ENCODE measurements at regions of chr1 and their contacts with region 1.

Region 1: DNA sequence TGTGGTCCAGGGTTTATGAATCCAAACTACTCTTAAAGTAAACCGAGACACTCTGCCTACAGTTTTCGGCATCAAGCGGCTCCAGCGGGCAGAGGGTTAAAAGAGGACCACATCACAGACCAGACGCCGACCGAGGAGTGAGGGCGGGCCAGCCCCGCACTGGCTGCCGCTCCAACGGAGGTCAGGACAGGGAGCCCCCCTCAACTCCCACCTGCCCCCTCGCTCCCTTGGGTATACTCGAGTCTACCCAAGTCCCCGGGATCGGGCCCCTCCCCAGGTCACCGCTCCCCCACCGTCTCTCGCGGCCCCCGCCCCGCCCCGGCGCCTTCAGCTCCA is 312 bp downstream of the ARNT start:
- DNase-seq: no peak
- H3K4me3 ChIP-seq: peak overlapping the region; percentile 60 to 93
- H3K4me3 Mint-ChIP-seq: peak overlapping the region; percentile 88 to 97 (median 95)
- H3K27ac ChIP-seq: peak overlapping the region; percentile 81
- H3K27ac Mint-ChIP-seq: peak overlapping the region; percentile 88 to 97 (median 95)
- H3K4me1 ChIP-seq: peaks cover 25% of the 10 kb centered on the region
- H3K4me1 Mint-ChIP-seq: peaks cover 23 to 47% (median 35%) of the 10 kb centered on the region in 4 donors
- H3K27me3 ChIP-seq: no peaks in the 10 kb centered on the region
- H3K27me3 Mint-ChIP-seq: no peaks in the 10 kb centered on the region

Region 2: GRCh38 chr1:150696590-150697524 is 179.2 kb before region 1 on chr1 and contains the start of gene GOLPH3L:
- CTCF ChIA-PET with region 1: no interaction called
- POLR2A ChIA-PET with region 1: interaction called, 4 read pairs
- intact Hi-C with region 1: loop called (anchors 5 kb)
- DNase-seq: peak; percentile 90 to 97 (median 93)
- H3K4me3 ChIP-seq: peak within 1 kb of the TSS; percentile 86 to 92
- H3K4me3 Mint-ChIP-seq: peak within 1 kb of the TSS; percentile 94 to 100 (median 98)
- H3K27ac ChIP-seq: peak within 1 kb of the TSS; percentile 70
- H3K27ac Mint-ChIP-seq: peak within 1 kb of the TSS; percentile 88 to 100 (median 96)
- H3K4me1 ChIP-seq: peaks cover 27% of the 10 kb centered on the region
- H3K4me1 Mint-ChIP-seq: peaks cover 17 to 40% (median 27%) of the 10 kb centered on the region in 4 donors
- H3K27me3 ChIP-seq: no peaks in the 10 kb centered on the region
- H3K27me3 Mint-ChIP-seq: peaks cover 1 to 3% of the 10 kb centered on the region in 2 donors
- total RNA-seq, gene GOLPH3L: 29.7 to 30.4 TPM

Region 3: GRCh38 chr1:150765296-150765976 is 110.7 kb before region 1 on chr1 and contains the start of gene CTSS:
- CTCF ChIA-PET with region 1: no interaction called
- POLR2A ChIA-PET with region 1: interaction called, 4 read pairs
- intact Hi-C with region 1: loop called (anchors 5 kb)
- DNase-seq: peak in 4 of 5 donors; percentile 34 to 46 (median 38)
- H3K4me3 ChIP-seq: peak within 1 kb of the TSS; percentile 55 to 71
- H3K4me3 Mint-ChIP-seq: peak within 1 kb of the TSS; percentile 89 to 98 (median 93)
- H3K27ac ChIP-seq: peak within 1 kb of the TSS; percentile 51
- H3K27ac Mint-ChIP-seq: peak within 1 kb of the TSS; percentile 87 to 98 (median 95)
- H3K4me1 ChIP-seq: peaks cover 43% of the 10 kb centered on the region
- H3K4me1 Mint-ChIP-seq: peaks cover 29 to 58% (median 42%) of the 10 kb centered on the region in 4 donors
- H3K27me3 ChIP-seq: no peaks in the 10 kb centered on the region
- H3K27me3 Mint-ChIP-seq: no peaks in the 10 kb centered on the region
- total RNA-seq, gene CTSS: 119 TPM

Region 4: GRCh38 chr1:150841626-150842025 is 34.5 kb before region 1 on chr1:
- CTCF ChIA-PET with region 1: no interaction called
- POLR2A ChIA-PET with region 1: no interaction called
- intact Hi-C with region 1: loop called (anchors 5 kb)
- DNase-seq: peak in 4 of 5 donors; percentile 32 to 63 (median 46)
- H3K4me3 ChIP-seq: no peak overlapping the region
- H3K4me3 Mint-ChIP-seq: peak overlapping the region in 2 of 8 donors; percentile 57 to 64
- H3K27ac ChIP-seq: no peak overlapping the region
- H3K27ac Mint-ChIP-seq: peak overlapping the region in 6 of 7 donors; percentile 15 to 88 (median 80)
- H3K4me1 ChIP-seq: peaks cover 17% of the 10 kb centered on the region
- H3K4me1 Mint-ChIP-seq: peaks cover 18 to 26% (median 23%) of the 10 kb centered on the region in 4 donors
- H3K27me3 ChIP-seq: no peaks in the 10 kb centered on the region
- H3K27me3 Mint-ChIP-seq: no peaks in the 10 kb centered on the region

Region 5: DNA sequence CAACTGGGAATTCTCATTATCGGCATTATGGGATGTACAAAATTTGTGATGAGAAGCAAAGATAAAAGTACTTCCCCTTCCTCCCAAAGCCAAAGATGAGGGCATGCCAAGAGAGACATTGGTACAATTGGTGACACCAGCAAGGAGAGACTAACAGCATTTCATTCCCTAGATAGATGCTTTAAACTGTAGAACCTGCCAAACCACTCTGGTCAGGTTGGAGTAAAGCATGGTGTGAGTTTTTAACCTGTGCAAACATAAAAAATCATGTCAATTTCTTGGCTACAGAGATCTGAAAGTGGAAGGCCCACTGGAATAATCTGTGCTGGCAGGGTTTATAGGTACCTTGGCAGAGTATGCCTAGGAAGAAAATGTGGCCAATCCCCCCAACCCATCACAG is 30.3 kb after region 1 on chr1:
- CTCF ChIA-PET with region 1: no interaction called
- POLR2A ChIA-PET with region 1: no interaction called
- intact Hi-C with region 1: no loop called
- DNase-seq: no peak
- H3K4me3 ChIP-seq: no peak overlapping the region
- H3K4me3 Mint-ChIP-seq: no peak overlapping the region
- H3K27ac ChIP-seq: no peak overlapping the region
- H3K27ac Mint-ChIP-seq: no peak overlapping the region
- H3K4me1 ChIP-seq: no peaks in the 10 kb centered on the region
- H3K4me1 Mint-ChIP-seq: no peaks in the 10 kb centered on the region
- H3K27me3 ChIP-seq: no peaks in the 10 kb centered on the region
- H3K27me3 Mint-ChIP-seq: no peaks in the 10 kb centered on the region

Region 6: DNA sequence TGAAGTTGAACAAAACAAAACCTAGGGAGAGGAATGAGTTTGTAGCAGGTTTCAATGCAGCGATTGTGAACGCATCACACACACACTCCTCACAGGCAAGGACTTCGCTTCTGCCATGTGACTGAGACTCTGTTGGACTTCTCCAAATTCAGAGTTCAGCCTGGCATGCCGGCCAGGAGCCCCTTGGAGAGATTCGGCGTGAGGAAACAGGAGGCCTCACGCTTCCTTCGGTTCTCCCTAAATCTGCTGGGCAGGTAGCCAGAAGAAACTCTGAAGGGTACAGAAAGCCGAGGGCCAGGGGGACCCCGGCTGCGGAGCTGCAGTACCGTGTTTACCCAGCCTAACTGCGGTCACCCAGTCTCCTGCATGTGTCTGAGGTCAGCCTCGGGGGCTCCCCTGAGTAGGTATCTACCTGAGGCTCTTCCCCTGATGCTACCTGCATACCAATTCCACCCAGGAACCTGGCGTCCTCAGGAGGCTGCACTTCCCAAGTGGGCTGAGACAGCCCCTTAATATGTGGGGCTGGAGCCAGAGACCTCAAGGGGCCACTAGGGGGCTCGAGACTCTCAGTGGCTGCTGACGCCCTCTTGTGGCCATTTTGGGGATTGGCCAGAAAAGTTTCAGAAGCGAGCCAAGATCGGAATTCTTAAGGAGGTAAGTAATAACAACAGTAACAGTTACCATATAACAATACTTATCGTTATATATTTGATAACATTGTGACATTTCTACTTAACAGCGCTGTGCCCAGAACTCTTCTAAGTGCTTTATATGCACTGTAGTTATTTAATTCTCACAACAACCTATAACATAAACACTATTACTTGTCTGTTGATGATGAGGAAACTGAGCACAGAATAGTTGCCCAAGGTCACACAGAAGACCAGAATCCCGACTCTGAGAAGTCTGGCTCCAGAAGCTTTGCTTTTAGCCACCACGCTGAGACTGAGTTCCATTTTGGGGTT is 103.3 kb after region 1 on chr1:
- CTCF ChIA-PET with region 1: no interaction called
- POLR2A ChIA-PET with region 1: interaction called, 5 read pairs
- intact Hi-C with region 1: loop called (anchors 2 kb)
- DNase-seq: peak; percentile 83 to 87 (median 85)
- H3K4me3 ChIP-seq: peak overlapping the region in 1 of 2 donors; percentile 52
- H3K4me3 Mint-ChIP-seq: peak overlapping the region in 4 of 8 donors; percentile 29 to 59 (median 41)
- H3K27ac ChIP-seq: peak overlapping the region; percentile 11
- H3K27ac Mint-ChIP-seq: peak overlapping the region in 6 of 7 donors; percentile 48 to 83 (median 64)
- H3K4me1 ChIP-seq: peaks cover 39% of the 10 kb centered on the region
- H3K4me1 Mint-ChIP-seq: peaks cover 20 to 44% (median 31%) of the 10 kb centered on the region in 4 donors
- H3K27me3 ChIP-seq: no peaks in the 10 kb centered on the region
- H3K27me3 Mint-ChIP-seq: no peaks in the 10 kb centered on the region